ENCODE measurements at regions of chr14 and their contacts with region 1.

Region 1: DNA sequence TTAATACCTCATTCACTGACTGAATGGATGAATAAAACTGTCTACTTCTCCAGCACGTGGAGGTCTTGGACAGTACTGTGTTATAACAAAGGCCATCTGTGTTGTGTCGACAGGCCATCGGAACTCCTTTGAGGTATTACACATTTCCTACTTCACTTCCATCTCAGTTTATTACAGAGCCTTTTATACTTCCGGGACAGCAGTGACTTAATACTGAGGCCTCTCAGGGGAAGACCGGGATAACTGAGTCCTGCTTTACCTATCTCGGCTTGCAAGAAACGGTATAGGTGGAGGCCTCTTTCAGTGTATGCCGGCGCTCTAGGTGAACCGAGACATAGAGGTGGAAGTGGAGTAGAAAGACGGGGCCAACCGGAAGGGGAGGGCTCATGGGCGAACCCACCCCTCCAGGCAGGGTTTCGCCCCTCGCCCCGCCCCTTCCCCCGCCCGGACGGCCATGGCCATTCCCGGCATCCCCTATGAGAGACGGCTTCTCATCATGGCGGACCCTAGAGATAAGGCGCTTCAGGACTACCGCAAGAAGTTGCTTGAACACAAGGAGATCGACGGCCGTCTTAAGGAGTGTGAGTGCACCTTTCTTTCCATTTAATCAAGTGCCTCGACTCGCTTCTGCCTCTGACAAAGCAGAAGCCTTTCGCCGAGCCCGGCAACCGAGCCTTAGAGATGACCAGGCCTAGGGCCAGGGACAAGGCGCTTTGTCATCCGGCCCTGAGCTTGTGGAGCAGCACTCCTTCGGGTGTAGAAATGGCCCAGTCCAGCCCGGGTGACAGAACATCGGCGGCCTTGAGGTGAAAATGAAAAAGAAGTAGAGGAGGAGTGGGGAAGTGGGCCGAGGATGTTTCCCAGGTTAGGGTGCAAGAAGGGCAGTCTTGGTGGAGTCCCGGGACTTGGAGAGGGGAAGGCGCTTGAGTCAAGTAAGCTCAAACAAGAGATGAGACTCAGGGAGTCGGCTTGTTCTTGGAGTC is at the start of gene PSMC6:
- DNase-seq: peak; percentile 96
- H3K4me3 Mint-ChIP-seq: peak within 1 kb of the TSS; percentile 99
- H3K27ac Mint-ChIP-seq: peak within 1 kb of the TSS; percentile 98
- H3K4me1 Mint-ChIP-seq: peaks cover 34% of the 10 kb centered on the region
- H3K27me3 Mint-ChIP-seq: no peaks in the 10 kb centered on the region
- total RNA-seq, gene PSMC6: 142 and 143 TPM in 2 replicates

Region 2: DNA sequence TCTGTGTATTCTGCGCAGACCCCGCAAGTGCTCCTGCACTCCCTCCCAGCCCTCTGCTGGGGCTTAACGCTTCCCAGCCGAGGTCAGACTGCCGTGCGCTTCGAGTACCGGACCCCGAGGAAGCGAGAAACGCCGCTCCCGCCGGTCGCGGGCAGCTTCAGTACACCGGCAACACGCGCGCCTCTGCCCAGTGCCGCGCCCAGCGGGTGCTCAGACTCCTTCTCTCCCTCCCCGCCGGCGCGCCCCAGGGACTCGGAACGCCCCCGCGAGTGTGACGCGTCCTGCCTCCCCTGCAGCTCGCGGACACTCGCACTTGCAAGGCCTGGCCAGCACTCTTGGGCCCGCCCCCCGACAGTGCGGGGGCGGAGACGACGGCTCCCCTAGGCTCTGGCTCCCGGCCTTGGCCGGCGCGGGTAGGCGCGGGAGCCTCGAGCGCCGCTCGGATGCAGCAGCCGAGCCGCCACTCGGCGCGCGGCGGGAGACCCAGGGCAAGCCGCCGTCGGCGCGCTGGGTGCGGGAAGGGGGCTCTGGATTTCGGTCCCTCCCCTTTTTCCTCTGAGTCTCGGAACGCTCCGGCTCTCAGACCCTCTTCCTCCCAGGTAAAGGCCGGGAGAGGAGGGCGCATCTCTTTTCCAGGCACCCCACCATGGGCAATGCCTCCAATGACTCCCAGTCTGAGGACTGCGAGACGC is 393.0 kb before region 1 on chr14 and contains the start of gene PTGER2:
- intact Hi-C with region 1: loop called (anchors 10 kb)
- DNase-seq: peak; percentile 97
- H3K4me3 Mint-ChIP-seq: peak within 1 kb of the TSS; percentile 99
- H3K27ac Mint-ChIP-seq: peak within 1 kb of the TSS; percentile 99
- H3K4me1 Mint-ChIP-seq: peaks cover 62% of the 10 kb centered on the region
- H3K27me3 Mint-ChIP-seq: no peaks in the 10 kb centered on the region
- total RNA-seq, gene PTGER2: 66.7 and 69.9 TPM in 2 replicates

Region 3: GRCh38 chr14:52695481-52696091 is 11.4 kb before region 1 on chr14 and contains the start of gene ERO1A:
- intact Hi-C with region 1: loop called (anchors 1 kb)
- DNase-seq: peak; percentile 92
- H3K4me3 Mint-ChIP-seq: peak within 1 kb of the TSS; percentile 96
- H3K27ac Mint-ChIP-seq: peak within 1 kb of the TSS; percentile 99
- H3K4me1 Mint-ChIP-seq: peaks cover 33% of the 10 kb centered on the region
- H3K27me3 Mint-ChIP-seq: no peaks in the 10 kb centered on the region
- total RNA-seq, gene ERO1A: 170 and 171 TPM in 2 replicates

Region 4: GRCh38 chr14:52791203-52792096 is 84.4 kb after region 1 on chr14 and contains the start of gene GNPNAT1:
- intact Hi-C with region 1: loop called (anchors 2 kb)
- DNase-seq: peak; percentile 96
- H3K4me3 Mint-ChIP-seq: peak within 1 kb of the TSS; percentile 97
- H3K27ac Mint-ChIP-seq: peak within 1 kb of the TSS; percentile 83
- H3K4me1 Mint-ChIP-seq: peaks cover 32% of the 10 kb centered on the region
- H3K27me3 Mint-ChIP-seq: no peaks in the 10 kb centered on the region
- total RNA-seq, gene GNPNAT1: 30.6 and 32.4 TPM in 2 replicates

Measured in activated CD4-positive, alpha-beta T cell treated with anti-CD3 and anti-CD28 coated beads, Interleukin-2, amount 10 ng/mL, durations not matched to agents 24 days and 14 days (primary cell).